WTC11 (cell line): ENCODE measurements at regions of chr22 and their contacts with region 1.

Region 1: GRCh38 chr22:40922484-40923303 is 28.5 kb upstream of the RBX1 start:
- DNase-seq: no peak
- ATAC-seq: no peak
- H3K4me3 Mint-ChIP-seq: no peak overlapping the region
- H3K27ac Mint-ChIP-seq: no peak overlapping the region; the same call in 1 of the 2 replicates
- H3K4me1 Mint-ChIP-seq: no peaks in the 10 kb centered on the region
- H3K27me3 Mint-ChIP-seq: no peaks in the 10 kb centered on the region
- CTCF ChIP-seq: peak; percentile 59

Region 2: GRCh38 chr22:40838486-40838885 is 84.2 kb before region 1 on chr22:
- CTCF ChIA-PET with region 1: no interaction called
- POLR2A ChIA-PET with region 1: no interaction called
- DNase-seq: no peak
- ATAC-seq: no peak
- H3K4me3 Mint-ChIP-seq: no peak overlapping the region
- H3K27ac Mint-ChIP-seq: no peak overlapping the region
- H3K4me1 Mint-ChIP-seq: no peaks in the 10 kb centered on the region
- H3K27me3 Mint-ChIP-seq: no peaks in the 10 kb centered on the region
- CTCF ChIP-seq: no peak

Region 3: GRCh38 chr22:40908895-40909294 is 13.8 kb before region 1 on chr22:
- CTCF ChIA-PET with region 1: interaction called, 22 read pairs
- POLR2A ChIA-PET with region 1: no interaction called
- DNase-seq: no peak
- ATAC-seq: peak; percentile 60
- H3K4me3 Mint-ChIP-seq: no peak overlapping the region
- H3K27ac Mint-ChIP-seq: peak overlapping the region; percentile 19; the same call in 1 of the 2 replicates
- H3K4me1 Mint-ChIP-seq: 0 out of 2 replicates have a peak, but pooled peaks cover 2% of the 10 kb centered on the region
- H3K27me3 Mint-ChIP-seq: no peaks in the 10 kb centered on the region
- CTCF ChIP-seq: no peak

Region 4: DNA sequence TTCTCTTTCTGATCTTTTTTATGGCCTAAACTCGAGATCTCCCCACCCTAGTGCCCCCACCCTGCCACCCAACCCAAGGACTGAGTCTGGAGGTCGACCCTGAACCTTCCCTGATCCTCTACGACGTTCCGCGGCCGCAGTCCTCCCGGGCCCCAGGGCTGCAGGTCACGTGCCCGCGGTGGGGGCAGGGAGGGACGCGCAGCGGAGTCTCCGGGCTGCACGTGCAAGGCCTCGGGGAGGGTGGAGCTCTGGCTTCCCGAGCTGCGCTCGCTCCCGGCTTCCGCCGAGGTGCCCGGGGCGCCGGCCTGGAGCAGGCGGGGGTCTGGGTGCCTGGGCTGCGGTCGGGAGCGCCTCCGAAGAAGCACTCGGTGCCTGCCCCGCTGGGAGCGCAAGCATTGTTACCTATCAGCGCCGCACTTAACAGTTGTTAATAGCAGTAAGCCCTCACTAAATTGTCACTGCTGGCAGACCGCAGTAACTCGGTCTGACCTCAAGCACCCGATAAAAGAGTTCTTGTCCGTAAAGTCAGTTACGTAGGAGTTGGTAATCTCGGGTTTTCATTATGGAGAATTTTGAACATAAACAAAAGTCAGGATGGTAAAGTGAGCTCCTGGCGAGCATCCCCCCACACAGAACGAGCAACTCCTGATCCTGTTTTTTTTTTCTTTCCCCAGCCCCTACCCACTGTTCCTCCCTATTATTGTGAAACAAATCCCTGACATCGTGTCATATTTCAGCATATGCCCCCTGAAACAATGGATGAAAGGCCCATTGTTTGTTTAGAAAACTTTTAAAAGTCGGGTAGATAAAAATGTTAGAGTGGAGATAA is 100.0 kb after region 1 on chr22:
- CTCF ChIA-PET with region 1: interaction called, 12 read pairs
- POLR2A ChIA-PET with region 1: no interaction called
- DNase-seq: peak; percentile 93
- ATAC-seq: peak; percentile 81
- H3K4me3 Mint-ChIP-seq: peak overlapping the region; percentile 51
- H3K27ac Mint-ChIP-seq: peak overlapping the region; percentile 63; the same call in 1 of the 2 replicates
- H3K4me1 Mint-ChIP-seq: peaks cover 21% of the 10 kb centered on the region
- H3K27me3 Mint-ChIP-seq: peaks cover 7% of the 10 kb centered on the region
- CTCF ChIP-seq: no peak

Region 5: GRCh38 chr22:41197038-41197972 is 274.6 kb after region 1 on chr22:
- CTCF ChIA-PET with region 1: interaction called, 11 read pairs
- POLR2A ChIA-PET with region 1: no interaction called
- DNase-seq: peak; percentile 86
- ATAC-seq: peak; percentile 90
- H3K4me3 Mint-ChIP-seq: peak overlapping the region; percentile 81
- H3K27ac Mint-ChIP-seq: no peak overlapping the region
- H3K4me1 Mint-ChIP-seq: peaks cover 9% of the 10 kb centered on the region
- H3K27me3 Mint-ChIP-seq: peaks cover 59% of the 10 kb centered on the region
- CTCF ChIP-seq: no peak